Activated B cell treated with CpG ODN at 0.5 μM for 24 hours (primary cell): ENCODE measurements at regions of chr12 and their contacts with region 1.

Region 1: DNA sequence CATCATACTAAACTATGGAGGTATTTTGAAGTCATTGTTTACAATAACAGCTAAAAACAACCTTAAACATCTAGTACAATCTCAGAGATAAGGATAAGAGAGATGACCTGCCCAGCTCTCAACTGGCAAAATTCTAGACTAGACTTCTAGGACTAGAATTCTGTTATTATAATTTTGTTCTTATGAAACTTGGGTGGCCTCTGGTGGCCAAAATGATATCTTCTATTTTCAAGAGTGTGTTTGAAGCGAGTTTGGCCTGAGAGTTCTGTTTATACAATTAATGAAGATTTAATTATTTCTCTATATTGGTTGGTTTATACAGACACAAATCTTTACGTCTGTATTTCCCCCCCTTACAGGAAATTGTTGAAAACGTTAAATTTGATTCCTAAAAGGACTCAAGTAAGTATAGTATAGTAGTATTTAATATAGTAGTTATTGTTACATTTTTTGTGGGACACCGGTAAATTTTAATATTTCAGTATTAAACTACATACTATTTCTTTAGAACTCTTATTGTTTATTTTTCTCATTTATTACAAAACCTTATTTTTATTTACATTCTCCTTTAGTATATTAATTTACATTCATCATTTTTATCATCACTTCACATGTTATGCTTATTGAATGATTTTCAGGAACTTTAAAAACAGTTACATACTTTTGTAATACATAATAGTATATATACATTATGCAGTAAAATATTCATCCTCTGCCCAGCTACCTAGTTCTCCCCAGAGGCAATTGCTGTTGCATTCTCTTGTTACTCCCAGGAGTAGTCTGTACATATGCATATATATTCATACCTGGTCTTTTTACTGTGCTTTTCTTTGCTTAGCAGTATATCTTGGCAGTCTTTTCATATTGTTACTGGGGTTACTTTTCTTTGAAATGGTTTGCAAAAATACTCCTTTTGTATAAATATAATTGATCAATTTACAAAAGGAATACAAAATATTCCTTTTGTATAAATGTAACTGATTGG is 6.6 kb downstream of the PPHLN1 start:
- DNase-seq: no peak
- ATAC-seq: peak; percentile 62
- H3K4me3 Mint-ChIP-seq: no peak overlapping the region
- H3K27ac Mint-ChIP-seq: no peak overlapping the region
- H3K4me1 Mint-ChIP-seq: peaks cover 62% of the 10 kb centered on the region
- H3K27me3 Mint-ChIP-seq: no peaks in the 10 kb centered on the region
- CTCF ChIP-seq: no peak

Region 2: DNA sequence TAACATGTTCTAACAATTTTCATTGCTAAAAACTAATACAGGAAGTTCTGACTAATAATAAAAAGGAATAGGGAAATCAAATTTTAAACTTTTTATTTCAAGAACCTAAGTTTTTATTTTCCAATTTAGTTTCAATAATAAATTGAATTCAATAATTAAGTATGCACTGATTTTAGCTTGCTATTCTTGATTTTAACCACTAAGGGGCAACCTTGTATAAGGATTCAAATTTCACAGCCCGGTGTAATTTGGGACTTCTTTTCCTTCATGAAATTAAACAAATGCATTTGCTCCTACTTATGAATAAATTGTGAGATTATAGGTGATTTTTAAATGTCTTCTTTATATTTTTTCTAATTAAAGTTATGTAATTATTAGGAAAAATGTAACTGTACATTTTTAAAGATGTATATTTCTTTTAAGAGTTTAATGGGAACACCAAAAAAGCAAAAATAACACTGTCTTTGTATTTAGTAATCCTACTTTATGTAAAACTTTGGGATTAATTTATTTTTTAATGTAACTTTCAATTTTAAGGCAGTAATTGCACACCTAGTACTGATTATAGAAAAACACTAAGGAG is 1385.9 kb before region 1 on chr12:
- CTCF ChIA-PET with region 1: no interaction called
- POLR2A ChIA-PET with region 1: no interaction called
- intact Hi-C with region 1: loop called (anchors 5 kb)
- DNase-seq: no peak
- ATAC-seq: peak; percentile 25
- H3K4me3 Mint-ChIP-seq: no peak overlapping the region
- H3K27ac Mint-ChIP-seq: no peak overlapping the region
- H3K4me1 Mint-ChIP-seq: no peaks in the 10 kb centered on the region
- H3K27me3 Mint-ChIP-seq: peaks cover 7% of the 10 kb centered on the region
- CTCF ChIP-seq: no peak

Region 3: GRCh38 chr12:41277116-41277945 is 1055.3 kb before region 1 on chr12:
- CTCF ChIA-PET with region 1: interaction called, 7 read pairs
- POLR2A ChIA-PET with region 1: no interaction called
- intact Hi-C with region 1: loop called (anchors 1 kb)
- DNase-seq: no peak
- ATAC-seq: peak; percentile 37
- H3K4me3 Mint-ChIP-seq: no peak overlapping the region
- H3K27ac Mint-ChIP-seq: no peak overlapping the region
- H3K4me1 Mint-ChIP-seq: peaks cover 3% of the 10 kb centered on the region
- H3K27me3 Mint-ChIP-seq: peaks cover 5% of the 10 kb centered on the region
- CTCF ChIP-seq: no peak

Region 4: DNA sequence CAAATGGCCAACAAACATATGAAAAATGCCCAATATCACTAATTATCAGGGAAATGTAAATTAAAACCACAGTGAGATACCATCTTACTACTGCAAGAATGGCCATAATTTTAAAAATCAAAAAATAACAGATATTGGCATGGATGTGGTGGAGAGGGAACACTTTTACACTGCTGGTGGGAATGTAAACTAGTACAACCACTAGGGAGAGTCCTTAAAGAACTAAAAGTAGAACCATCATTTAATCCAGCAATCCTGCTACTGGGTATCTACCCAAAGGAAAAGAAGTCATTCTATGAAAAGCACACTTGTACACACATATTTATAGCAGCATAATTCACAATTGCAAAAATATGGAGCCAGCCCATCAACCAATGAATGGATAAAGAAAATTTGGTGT is 647.6 kb before region 1 on chr12:
- CTCF ChIA-PET with region 1: no interaction called
- POLR2A ChIA-PET with region 1: no interaction called
- intact Hi-C with region 1: loop called (anchors 2 kb)
- DNase-seq: no peak
- ATAC-seq: no peak
- H3K4me3 Mint-ChIP-seq: no peak overlapping the region
- H3K27ac Mint-ChIP-seq: no peak overlapping the region
- H3K4me1 Mint-ChIP-seq: peaks cover 3% of the 10 kb centered on the region
- H3K27me3 Mint-ChIP-seq: no peaks in the 10 kb centered on the region
- CTCF ChIP-seq: no peak

Region 5: DNA sequence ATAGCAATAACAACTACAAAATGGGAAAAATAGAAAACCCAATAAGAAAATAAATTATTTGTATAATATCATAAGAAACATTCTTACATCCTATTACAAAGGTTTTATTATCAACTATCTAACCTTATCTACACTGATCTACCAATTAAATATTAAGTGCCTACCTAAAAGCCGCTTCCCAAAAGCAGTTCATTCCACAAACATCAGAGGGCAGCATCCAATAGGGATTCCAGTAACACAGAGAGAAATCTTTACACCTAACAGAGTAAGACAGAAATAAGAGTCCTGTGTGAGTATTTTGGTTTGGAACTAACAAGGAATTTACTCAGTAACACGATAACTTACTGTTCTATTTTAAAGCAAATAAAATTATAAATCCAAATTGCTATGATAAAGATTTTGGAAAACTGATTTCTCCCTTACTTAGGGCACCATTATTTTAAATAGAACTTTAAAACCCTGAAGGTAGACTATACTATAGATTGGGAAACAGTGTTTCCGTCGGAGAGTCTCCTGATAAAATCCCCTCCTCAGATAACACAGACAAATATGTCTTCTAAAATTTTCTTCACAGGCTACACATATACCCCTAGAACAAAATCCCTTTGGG is 202.9 kb before region 1 on chr12:
- CTCF ChIA-PET with region 1: interaction called, 6 read pairs
- POLR2A ChIA-PET with region 1: no interaction called
- intact Hi-C with region 1: loop called (anchors 1 kb)
- DNase-seq: no peak
- ATAC-seq: peak; percentile 52
- H3K4me3 Mint-ChIP-seq: no peak overlapping the region
- H3K27ac Mint-ChIP-seq: no peak overlapping the region
- H3K4me1 Mint-ChIP-seq: peaks cover 15% of the 10 kb centered on the region
- H3K27me3 Mint-ChIP-seq: no peaks in the 10 kb centered on the region
- CTCF ChIP-seq: no peak

Region 6: GRCh38 chr12:42372154-42372791 is 39.7 kb after region 1 on chr12:
- CTCF ChIA-PET with region 1: interaction called, 7 read pairs
- POLR2A ChIA-PET with region 1: no interaction called
- intact Hi-C with region 1: loop called (anchors 5 kb)
- DNase-seq: no peak
- ATAC-seq: peak; percentile 94
- H3K4me3 Mint-ChIP-seq: no peak overlapping the region
- H3K27ac Mint-ChIP-seq: no peak overlapping the region
- H3K4me1 Mint-ChIP-seq: peaks cover 16% of the 10 kb centered on the region
- H3K27me3 Mint-ChIP-seq: no peaks in the 10 kb centered on the region
- CTCF ChIP-seq: peak; percentile 30